ENCODE measurements at regions of chr10 and their contacts with region 1.

Region 1: DNA sequence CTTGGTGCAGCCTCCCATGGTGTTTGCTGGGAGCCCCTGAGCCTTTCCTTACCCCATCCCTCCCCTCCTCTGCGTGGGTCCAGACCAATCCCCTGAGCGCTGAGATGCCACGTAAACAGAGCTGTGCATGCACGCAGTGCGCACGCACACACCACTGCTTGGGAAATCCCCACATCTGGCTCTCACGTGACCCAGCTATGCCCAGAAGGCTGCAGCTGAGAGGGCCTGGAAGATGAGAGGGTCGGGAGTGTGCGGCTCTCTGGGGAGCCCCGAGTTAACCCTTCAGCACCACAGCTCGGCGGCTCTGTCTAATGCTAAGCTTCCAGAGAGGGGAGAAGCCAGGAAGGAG is 177.2 kb downstream of the SH3PXD2A start:
- DNase-seq: peak; percentile 97
- H3K4me3 ChIP-seq: peak overlapping the region; percentile 72
- CTCF ChIP-seq: no peak

Region 2: GRCh38 chr10:103666087-103666761 is 11.9 kb before region 1 on chr10:
- CTCF ChIA-PET with region 1: interaction called, 84 read pairs
- POLR2A ChIA-PET with region 1: interaction called, 11 read pairs
- DNase-seq: no peak
- H3K4me3 ChIP-seq: no peak overlapping the region
- CTCF ChIP-seq: peak; percentile 36

Region 3: GRCh38 chr10:104080762-104081161 is 402.6 kb after region 1 on chr10:
- CTCF ChIA-PET with region 1: no interaction called
- POLR2A ChIA-PET with region 1: no interaction called
- DNase-seq: no peak
- H3K4me3 ChIP-seq: no peak overlapping the region
- CTCF ChIP-seq: no peak